Dendritic cell treated with granulocyte-macrophage colony-stimulating factor and Interleukin-4, amounts not matched to agents 40 ng/mL and 50 ng/mL, for 4 days (primary cell): ENCODE measurements at regions of chr14 and their contacts with region 1.

Region 1: GRCh38 chr14:77320238-77320935 is at the start of gene POMT2:
- H3K4me3 Mint-ChIP-seq: peak within 1 kb of the TSS; percentile 85
- H3K27ac Mint-ChIP-seq: peak within 1 kb of the TSS; percentile 98
- H3K4me1 Mint-ChIP-seq: peaks cover 10% of the 10 kb centered on the region
- H3K27me3 Mint-ChIP-seq: no peaks in the 10 kb centered on the region

Region 2: GRCh38 chr14:77097700-77098528 is 222.5 kb before region 1 on chr14 and contains the start of gene CIPC:
- intact Hi-C with region 1: loop called (anchors 2 kb)
- H3K4me3 Mint-ChIP-seq: peak within 1 kb of the TSS; percentile 100
- H3K27ac Mint-ChIP-seq: peak within 1 kb of the TSS; percentile 100
- H3K4me1 Mint-ChIP-seq: peaks cover 66% of the 10 kb centered on the region
- H3K27me3 Mint-ChIP-seq: no peaks in the 10 kb centered on the region

Region 3: GRCh38 chr14:77151918-77152588 is 168.3 kb before region 1 on chr14:
- intact Hi-C with region 1: loop called (anchors 1 kb)
- H3K4me3 Mint-ChIP-seq: no peak overlapping the region
- H3K27ac Mint-ChIP-seq: no peak overlapping the region
- H3K4me1 Mint-ChIP-seq: no peaks in the 10 kb centered on the region
- H3K27me3 Mint-ChIP-seq: peaks cover 21% of the 10 kb centered on the region

Region 4: GRCh38 chr14:77301103-77301502 is 19.3 kb before region 1 on chr14:
- intact Hi-C with region 1: loop called (anchors 2 kb)
- H3K4me3 Mint-ChIP-seq: no peak overlapping the region
- H3K27ac Mint-ChIP-seq: no peak overlapping the region
- H3K4me1 Mint-ChIP-seq: peaks cover 28% of the 10 kb centered on the region
- H3K27me3 Mint-ChIP-seq: no peaks in the 10 kb centered on the region

Region 5: GRCh38 chr14:77376771-77377501 is 56.5 kb after region 1 on chr14 and contains the starts of genes SAMD15 and TMED8:
- intact Hi-C with region 1: loop called (anchors 2 kb)
- H3K4me3 Mint-ChIP-seq: no peak within 1 kb of the TSS
- H3K27ac Mint-ChIP-seq: no peak within 1 kb of the TSS
- H3K4me1 Mint-ChIP-seq: peaks cover 44% of the 10 kb centered on the region
- H3K27me3 Mint-ChIP-seq: no peaks in the 10 kb centered on the region

Region 6: GRCh38 chr14:77457522-77458290 is 137.3 kb after region 1 on chr14 and contains the starts of genes AHSA1 and VIPAS39:
- intact Hi-C with region 1: loop called (anchors 1 kb)
- H3K4me3 Mint-ChIP-seq: peak within 1 kb of the TSS; percentile 100
- H3K27ac Mint-ChIP-seq: peak within 1 kb of the TSS; percentile 98
- H3K4me1 Mint-ChIP-seq: peaks cover 23% of the 10 kb centered on the region
- H3K27me3 Mint-ChIP-seq: no peaks in the 10 kb centered on the region

Region 7: GRCh38 chr14:77516126-77516525 is 195.7 kb after region 1 on chr14:
- intact Hi-C with region 1: no loop called
- H3K4me3 Mint-ChIP-seq: no peak overlapping the region
- H3K27ac Mint-ChIP-seq: no peak overlapping the region
- H3K4me1 Mint-ChIP-seq: peaks cover 13% of the 10 kb centered on the region
- H3K27me3 Mint-ChIP-seq: no peaks in the 10 kb centered on the region

Region 8: GRCh38 chr14:77554207-77554606 is 233.8 kb after region 1 on chr14:
- intact Hi-C with region 1: loop called (anchors 5 kb)
- H3K4me3 Mint-ChIP-seq: no peak overlapping the region
- H3K27ac Mint-ChIP-seq: no peak overlapping the region
- H3K4me1 Mint-ChIP-seq: no peaks in the 10 kb centered on the region
- H3K27me3 Mint-ChIP-seq: no peaks in the 10 kb centered on the region